WTC11 (cell line): ENCODE measurements at regions of chr11 and their contacts with region 1.

Region 1: GRCh38 chr11:57515332-57516060 is at the start of gene SLC43A1:
- DNase-seq: peak; percentile 54
- ATAC-seq: peak; percentile 29
- H3K4me3 Mint-ChIP-seq: peak within 1 kb of the TSS; percentile 93
- H3K27ac Mint-ChIP-seq: no peak within 1 kb of the TSS
- H3K4me1 Mint-ChIP-seq: peaks cover 20% of the 10 kb centered on the region
- H3K27me3 Mint-ChIP-seq: peaks cover 22% of the 10 kb centered on the region
- CTCF ChIP-seq: no peak
- total RNA-seq, gene SLC43A1: 20.5 to 27.1 TPM (median 21.5 TPM) in 3 replicates

Region 2: GRCh38 chr11:57387289-57388030 is 128.0 kb before region 1 on chr11:
- CTCF ChIA-PET with region 1: no interaction called
- POLR2A ChIA-PET with region 1: no interaction called
- DNase-seq: no peak
- ATAC-seq: no peak
- H3K4me3 Mint-ChIP-seq: no peak overlapping the region
- H3K27ac Mint-ChIP-seq: no peak overlapping the region
- H3K4me1 Mint-ChIP-seq: no peaks in the 10 kb centered on the region
- H3K27me3 Mint-ChIP-seq: peaks cover 21% of the 10 kb centered on the region
- CTCF ChIP-seq: no peak

Region 3: DNA sequence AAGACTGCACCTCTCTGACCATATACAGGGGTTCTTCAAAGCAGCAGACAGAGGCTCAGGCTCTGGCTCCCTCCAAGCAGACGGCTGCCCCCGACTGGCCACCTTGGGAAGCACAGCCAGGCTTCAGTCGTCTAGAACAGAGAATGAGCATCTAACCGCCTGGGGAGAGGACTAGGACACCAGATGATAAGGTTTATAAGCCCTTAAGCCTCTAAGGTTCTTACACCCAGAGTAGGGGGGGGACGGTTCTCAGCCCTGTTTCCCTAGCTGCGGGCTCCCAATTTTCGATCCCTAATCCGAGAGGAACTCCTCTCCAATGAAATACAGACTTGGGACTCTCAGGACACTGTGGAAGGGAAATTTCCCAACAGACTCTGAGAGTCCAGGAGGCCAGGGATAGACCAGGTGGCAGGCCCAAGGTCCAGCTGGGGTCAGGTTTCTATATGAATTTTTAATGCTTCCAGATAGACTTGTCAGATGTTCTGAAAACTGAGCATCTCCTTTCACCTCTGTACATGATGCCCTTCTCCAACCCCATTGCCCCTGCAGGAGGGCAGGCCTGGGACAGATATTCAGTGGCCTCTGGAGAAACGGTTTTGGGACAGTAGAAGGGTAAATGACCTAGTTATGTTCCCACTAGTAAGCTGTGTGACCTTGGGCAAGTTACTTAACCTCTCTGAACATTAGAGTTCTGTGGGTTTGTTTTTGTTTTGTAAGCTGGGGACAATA is 34.9 kb before region 1 on chr11:
- CTCF ChIA-PET with region 1: interaction called, 22 read pairs
- POLR2A ChIA-PET with region 1: interaction called, 3 read pairs
- DNase-seq: peak; percentile 93
- ATAC-seq: peak; percentile 60
- H3K4me3 Mint-ChIP-seq: no peak overlapping the region
- H3K27ac Mint-ChIP-seq: 0 out of 2 replicates have a peak overlapping the region, but pooled peaks have one; percentile 14
- H3K4me1 Mint-ChIP-seq: peaks cover 56% of the 10 kb centered on the region
- H3K27me3 Mint-ChIP-seq: peaks cover 74% of the 10 kb centered on the region
- CTCF ChIP-seq: peak; percentile 73

Region 4: DNA sequence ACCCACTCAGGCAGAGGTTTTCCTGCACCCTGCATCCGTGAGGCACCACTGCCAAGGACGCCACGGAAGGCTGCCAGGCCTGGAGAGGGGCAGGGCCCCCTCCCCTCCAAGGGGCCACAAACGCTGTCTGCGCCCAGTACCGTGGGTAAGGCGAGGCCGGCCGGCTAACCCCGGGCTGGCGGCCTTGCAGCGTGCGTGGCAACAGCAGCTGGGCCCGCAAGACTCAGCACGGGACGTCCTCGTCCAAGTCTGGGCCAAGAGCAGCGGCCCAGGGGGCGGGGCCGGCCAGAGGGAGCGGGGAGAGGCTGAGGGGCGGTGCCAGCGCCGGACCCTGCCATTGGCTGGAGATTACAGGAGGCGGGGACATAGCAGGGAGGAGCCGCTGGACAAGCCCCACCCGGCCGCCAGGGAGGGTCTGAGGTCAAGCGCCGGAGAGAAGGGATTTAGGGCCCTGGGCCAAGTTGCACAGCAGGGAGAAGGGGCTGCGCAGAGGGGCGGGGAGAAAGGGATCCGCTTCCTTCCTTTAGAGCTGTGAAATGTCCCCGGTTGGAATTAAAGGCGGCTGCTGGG is 16.0 kb before region 1 on chr11:
- CTCF ChIA-PET with region 1: interaction called, 147 read pairs
- POLR2A ChIA-PET with region 1: interaction called, 13 read pairs
- DNase-seq: peak; percentile 99
- ATAC-seq: peak; percentile 100
- H3K4me3 Mint-ChIP-seq: peak overlapping the region; percentile 51
- H3K27ac Mint-ChIP-seq: peak overlapping the region; percentile 86; the same call in 1 of the 2 replicates
- H3K4me1 Mint-ChIP-seq: peaks cover 41% of the 10 kb centered on the region
- H3K27me3 Mint-ChIP-seq: no peaks in the 10 kb centered on the region; the same call in 1 of the 2 replicates
- CTCF ChIP-seq: no peak

Region 5: DNA sequence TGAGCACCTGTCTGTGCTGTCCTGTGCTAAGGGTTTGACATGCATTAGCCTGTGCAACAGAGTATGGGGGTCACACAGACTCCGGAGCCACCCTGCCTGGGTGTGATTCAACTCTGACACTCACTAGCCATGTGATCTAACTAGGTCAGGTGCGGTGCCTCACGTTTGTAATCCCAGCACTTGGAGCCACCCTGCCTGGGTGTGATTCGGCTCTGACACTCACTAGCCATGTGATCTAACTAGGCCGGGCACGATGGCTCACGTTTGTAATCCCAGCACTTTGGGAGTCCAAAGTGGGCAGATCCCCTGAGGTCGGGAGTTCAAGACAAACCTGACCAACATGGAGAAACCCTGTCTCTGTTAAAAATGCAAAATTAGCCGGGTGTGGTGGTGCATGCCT is 40.6 kb after region 1 on chr11:
- CTCF ChIA-PET with region 1: no interaction called
- POLR2A ChIA-PET with region 1: no interaction called
- DNase-seq: no peak
- ATAC-seq: no peak
- H3K4me3 Mint-ChIP-seq: no peak overlapping the region
- H3K27ac Mint-ChIP-seq: no peak overlapping the region; the same call in 1 of the 2 replicates
- H3K4me1 Mint-ChIP-seq: peaks cover 11% of the 10 kb centered on the region
- H3K27me3 Mint-ChIP-seq: no peaks in the 10 kb centered on the region
- CTCF ChIP-seq: no peak

Region 6: GRCh38 chr11:57574061-57574460 is 58.6 kb after region 1 on chr11:
- CTCF ChIA-PET with region 1: no interaction called
- POLR2A ChIA-PET with region 1: no interaction called
- DNase-seq: no peak
- ATAC-seq: peak; percentile 71
- H3K4me3 Mint-ChIP-seq: no peak overlapping the region
- H3K27ac Mint-ChIP-seq: peak overlapping the region; percentile 17; the same call in 1 of the 2 replicates
- H3K4me1 Mint-ChIP-seq: peaks cover 20% of the 10 kb centered on the region
- H3K27me3 Mint-ChIP-seq: peaks cover 3% of the 10 kb centered on the region; the same call in 1 of the 2 replicates
- CTCF ChIP-seq: no peak

Region 7: DNA sequence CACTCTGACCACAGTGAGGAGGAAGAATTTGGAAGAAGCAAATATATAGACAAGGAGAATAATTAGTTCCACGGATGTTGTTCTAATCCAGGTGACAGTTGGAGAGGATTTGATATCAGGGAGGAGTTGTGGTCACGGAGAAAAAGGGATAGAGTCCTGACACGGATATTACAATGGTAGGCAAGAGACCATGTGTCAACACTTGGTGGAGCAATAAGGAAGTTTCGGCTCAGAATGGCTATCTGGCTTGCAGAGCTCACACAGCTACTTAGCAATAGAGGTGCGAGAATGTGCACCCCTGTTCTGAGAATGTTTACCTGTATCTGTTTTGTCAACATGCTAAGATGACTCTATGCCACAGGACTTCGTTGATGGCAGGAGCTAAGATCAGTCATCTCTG is 662.9 kb after region 1 on chr11:
- CTCF ChIA-PET with region 1: no interaction called
- POLR2A ChIA-PET with region 1: no interaction called
- DNase-seq: no peak
- ATAC-seq: no peak
- H3K4me3 Mint-ChIP-seq: no peak overlapping the region
- H3K27ac Mint-ChIP-seq: no peak overlapping the region
- H3K4me1 Mint-ChIP-seq: peaks cover 10% of the 10 kb centered on the region
- H3K27me3 Mint-ChIP-seq: no peaks in the 10 kb centered on the region
- CTCF ChIP-seq: no peak